Common myeloid progenitor, CD34-positive (primary cell): ENCODE measurements at regions of chr2 and their contacts with region 1.

Region 1: DNA sequence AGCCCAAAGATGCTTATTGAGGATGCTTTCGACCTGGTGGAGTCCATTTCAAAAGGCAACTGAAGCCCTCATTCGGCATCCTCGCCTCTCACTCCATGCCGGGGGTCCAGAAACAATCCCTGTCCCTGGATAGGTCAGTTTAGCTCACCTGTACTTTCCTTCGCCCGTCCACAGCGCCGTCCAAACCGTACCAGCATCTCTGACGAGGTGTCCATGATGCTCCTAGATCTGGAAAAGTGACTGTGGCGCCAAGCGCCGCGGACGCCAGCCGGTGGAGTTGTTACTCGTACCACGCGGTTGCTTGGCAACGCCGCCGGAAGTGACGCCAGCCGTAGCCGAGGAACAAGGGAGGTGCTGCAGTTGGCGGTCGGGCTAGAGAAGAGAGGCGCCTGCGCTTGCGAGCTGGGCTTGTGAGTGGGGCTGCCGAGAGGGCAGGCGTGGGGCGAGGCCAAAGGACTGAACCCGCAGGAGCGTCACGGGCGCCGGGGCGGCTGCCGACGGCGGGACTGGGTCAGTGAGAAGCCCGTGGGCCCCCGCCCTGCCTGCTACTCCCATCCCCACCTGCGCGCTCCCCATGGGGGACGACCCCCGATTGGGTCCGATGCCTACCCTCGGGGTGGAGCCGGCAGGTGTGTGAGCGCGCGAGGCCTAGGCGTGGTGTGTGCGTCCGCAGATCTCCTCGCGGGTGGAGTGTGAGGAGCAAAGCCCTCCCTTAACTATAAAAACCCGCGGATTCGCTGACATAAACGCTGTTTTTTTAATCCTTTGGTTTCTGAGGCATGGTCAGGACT is at the starts of genes CFAP210 and PHOSPHO2:
- DNase-seq: peak; percentile 99
- H3K4me3 ChIP-seq: peak within 1 kb of the TSS; percentile 59 to 93 (median 84)
- H3K27ac ChIP-seq: peak within 1 kb of the TSS; percentile 94 to 95
- H3K4me1 ChIP-seq: peaks cover 6 to 16% (median 9%) of the 10 kb centered on the region in 4 experiments
- H3K27me3 ChIP-seq: no peaks in the 10 kb centered on the region

Region 2: GRCh38 chr2:169683054-169683424 is 11.3 kb before region 1 on chr2:
- CTCF ChIA-PET with region 1: interaction called, 20 read pairs
- POLR2A ChIA-PET with region 1: no interaction called
- DNase-seq: no peak
- H3K4me3 ChIP-seq: no peak overlapping the region
- H3K27ac ChIP-seq: no peak overlapping the region
- H3K4me1 ChIP-seq: peaks cover 0 to 6% (median 3%) of the 10 kb centered on the region in 4 experiments
- H3K27me3 ChIP-seq: no peaks in the 10 kb centered on the region

Region 3: GRCh38 chr2:169808221-169808620 is 113.9 kb after region 1 on chr2:
- CTCF ChIA-PET with region 1: no interaction called
- POLR2A ChIA-PET with region 1: no interaction called
- DNase-seq: no peak
- H3K4me3 ChIP-seq: no peak overlapping the region
- H3K27ac ChIP-seq: no peak overlapping the region
- H3K4me1 ChIP-seq: no peaks in the 10 kb centered on the region
- H3K27me3 ChIP-seq: no peaks in the 10 kb centered on the region

Region 4: DNA sequence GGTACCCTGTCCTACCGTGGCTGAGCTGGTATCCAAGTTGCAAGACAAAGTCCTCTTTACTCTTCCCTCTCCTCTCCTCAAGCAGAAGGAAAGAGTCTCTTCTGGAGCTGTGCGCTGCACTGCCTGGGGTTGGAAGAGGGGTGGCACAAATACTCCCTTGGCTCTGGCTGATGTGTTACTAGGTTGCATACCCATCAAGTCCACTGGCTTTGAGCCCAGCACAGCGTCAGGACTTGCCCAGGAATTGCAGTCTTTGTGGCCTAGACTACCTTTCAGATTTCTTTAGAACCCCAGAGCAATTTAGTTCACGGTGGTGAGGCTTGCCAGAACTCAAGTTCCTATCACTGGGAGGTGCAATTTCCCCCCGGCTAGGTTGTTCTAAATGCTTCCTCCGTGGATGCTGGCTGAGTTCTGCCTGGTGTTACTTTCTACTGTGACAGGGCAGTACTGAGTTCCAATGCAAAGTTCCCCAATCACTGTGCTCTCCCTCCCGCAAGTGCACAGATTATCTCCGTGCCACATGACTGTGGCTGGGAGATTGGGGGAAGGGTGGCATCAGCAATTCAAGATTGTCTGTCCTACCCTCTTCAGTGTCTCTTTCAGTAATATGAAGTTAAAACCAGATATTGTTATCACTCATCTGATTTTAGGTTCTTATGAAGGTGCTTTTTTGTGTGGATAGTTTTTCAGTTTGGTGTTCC is 497.0 kb after region 1 on chr2:
- CTCF ChIA-PET with region 1: no interaction called
- POLR2A ChIA-PET with region 1: no interaction called
- DNase-seq: no peak
- H3K4me3 ChIP-seq: no peak overlapping the region
- H3K27ac ChIP-seq: no peak overlapping the region
- H3K4me1 ChIP-seq: no peaks in the 10 kb centered on the region
- H3K27me3 ChIP-seq: no peaks in the 10 kb centered on the region